ENCODE measurements at regions of chr12 and their contacts with region 1.

Region 1: DNA sequence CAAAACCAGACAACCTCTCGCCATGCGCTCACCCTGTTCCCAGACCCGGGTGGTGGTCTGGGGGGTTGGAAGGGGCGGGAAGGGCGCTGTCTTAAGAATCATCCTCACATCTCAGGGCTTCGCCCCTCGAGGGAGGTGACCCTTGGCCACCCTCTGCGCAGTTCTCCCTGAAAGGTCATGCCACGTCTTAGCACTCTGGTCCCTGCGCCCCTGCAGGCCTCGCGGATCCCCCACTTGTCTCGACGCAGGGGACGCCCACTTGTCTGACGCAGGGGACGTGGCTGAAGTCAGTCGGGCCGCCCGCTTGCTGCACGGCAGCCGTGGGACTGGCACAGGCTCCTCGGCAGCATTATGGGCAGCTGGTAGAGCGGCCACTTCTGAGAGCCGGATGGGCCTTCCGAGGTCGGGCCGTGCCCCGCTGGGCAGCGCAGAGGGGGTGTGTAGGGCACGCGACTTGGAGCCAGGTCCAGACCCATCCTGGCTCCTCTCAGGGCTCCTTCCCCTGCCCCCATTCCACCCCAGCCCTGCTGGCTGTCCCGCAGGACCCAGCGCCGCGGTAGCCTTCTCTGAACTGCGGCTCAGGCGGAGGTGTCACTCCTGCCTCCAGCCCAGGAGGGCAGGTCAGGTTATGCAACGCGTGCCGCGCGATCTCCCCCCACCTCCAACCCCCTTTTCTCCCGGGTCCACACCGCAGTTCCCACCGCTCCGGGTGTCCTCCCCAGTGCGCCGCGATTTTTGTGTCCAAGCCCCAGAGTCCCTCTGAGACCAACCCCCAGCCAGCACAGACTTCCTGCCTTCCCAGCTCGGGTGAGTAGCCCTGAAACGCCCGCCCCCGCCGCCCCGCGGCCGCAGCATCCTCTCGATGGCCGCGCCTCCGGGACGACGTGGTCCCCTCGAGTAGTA is 40.9 kb upstream of the CAPRIN2 start:
- DNase-seq: peak; percentile 60 to 84 (median 69)
- ATAC-seq: peak; percentile 37 to 85 (median 80)
- H3K4me3 ChIP-seq: peak overlapping the region; percentile 48 to 80 (median 63)
- H3K27ac ChIP-seq: peak overlapping the region in 11 of 12 donors; percentile 11 to 89 (median 49)
- H3K4me1 ChIP-seq: peaks cover 0 to 27% (median 11%) of the 10 kb centered on the region in 12 donors
- H3K27me3 ChIP-seq: peaks cover 0 to 23% (median 0%) of the 10 kb centered on the region in 9 donors
- CTCF ChIP-seq: peak in 3 of 12 donors; percentile 8 to 19 (median 17)
- POLR2A ChIP-seq: no peak

Region 2: GRCh38 chr12:30732954-30733637 is 62.6 kb before region 1 on chr12:
- intact Hi-C with region 1: no loop called
- DNase-seq: no peak
- ATAC-seq: no peak
- H3K4me3 ChIP-seq: no peak overlapping the region
- H3K27ac ChIP-seq: no peak overlapping the region
- H3K4me1 ChIP-seq: no peaks in the 10 kb centered on the region
- H3K27me3 ChIP-seq: no peaks in the 10 kb centered on the region
- CTCF ChIP-seq: no peak
- POLR2A ChIP-seq: no peak

Region 3: DNA sequence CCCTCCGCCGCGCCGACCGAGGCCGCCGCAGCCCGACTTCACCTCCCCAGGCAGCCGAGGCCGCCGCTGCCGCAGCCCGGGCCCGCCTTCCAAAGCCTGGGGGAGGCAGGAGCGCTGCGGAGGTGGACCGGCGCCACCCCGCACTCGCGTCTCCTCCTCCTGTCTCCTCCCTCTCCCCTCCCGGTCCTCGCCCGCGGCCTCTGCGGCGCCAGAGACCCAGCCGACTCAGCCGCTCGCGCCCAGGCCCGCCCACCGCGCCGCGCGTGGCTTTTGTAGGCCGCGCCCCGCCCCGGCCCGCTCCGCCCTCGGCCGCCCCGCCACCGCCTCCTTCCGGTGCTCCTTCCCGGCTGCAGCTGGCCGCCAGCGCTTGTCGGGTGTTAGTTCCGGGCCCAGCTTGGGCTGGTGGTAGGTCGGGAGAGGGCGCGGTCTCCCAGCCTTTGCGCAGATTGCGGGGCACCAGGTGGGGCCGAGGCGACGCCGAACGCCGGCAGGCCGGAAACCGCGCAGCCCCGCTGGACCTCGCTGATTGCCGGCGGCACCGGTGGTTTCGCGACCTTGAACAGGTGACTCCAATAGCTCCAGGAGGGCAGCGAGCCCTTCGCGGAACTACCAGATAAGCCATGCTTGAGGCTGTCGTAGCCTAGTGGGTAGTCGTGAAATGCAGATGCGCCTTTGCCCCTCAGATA is 40.8 kb before region 1 on chr12 and contains the start of gene CAPRIN2:
- intact Hi-C with region 1: loop called in 5 of 10 experiments (anchors 5 kb)
- DNase-seq: peak; percentile 96 to 99 (median 97)
- ATAC-seq: peak; percentile 96 to 99 (median 98)
- H3K4me3 ChIP-seq: peak within 1 kb of the TSS; percentile 59 to 99 (median 82)
- H3K27ac ChIP-seq: peak within 1 kb of the TSS; percentile 75 to 93 (median 88)
- H3K4me1 ChIP-seq: peaks cover 0 to 30% (median 13%) of the 10 kb centered on the region in 12 donors
- H3K27me3 ChIP-seq: no peaks in the 10 kb centered on the region
- CTCF ChIP-seq: peak in 10 of 12 donors; percentile 20 to 68 (median 46)
- POLR2A ChIP-seq: peak in 1 of 2 donors; percentile 79
- total RNA-seq, gene CAPRIN2: 15.3 to 33.6 (median 30.4) TPM

Region 4: DNA sequence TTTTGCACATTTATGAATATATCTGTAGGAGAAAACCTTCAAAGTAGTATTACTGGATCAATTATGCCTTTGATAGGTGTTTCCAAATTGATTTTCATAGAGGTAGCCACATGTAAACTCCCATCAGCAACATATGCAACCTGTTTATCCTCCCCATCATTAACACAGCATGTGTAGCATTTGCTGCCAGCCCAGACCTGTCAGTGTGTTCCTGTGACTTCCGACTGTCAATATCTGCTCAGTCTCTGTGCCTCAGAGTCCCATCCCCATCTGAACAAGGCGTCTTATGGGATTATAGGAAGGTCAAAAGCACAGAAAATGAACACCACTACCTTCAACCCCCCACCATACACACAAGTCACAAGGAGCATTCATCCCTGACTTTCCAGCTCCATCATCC is 31.4 kb before region 1 on chr12:
- intact Hi-C with region 1: loop called in 5 of 10 experiments (anchors 5 kb)
- DNase-seq: no peak
- ATAC-seq: no peak
- H3K4me3 ChIP-seq: no peak overlapping the region
- H3K27ac ChIP-seq: no peak overlapping the region
- H3K4me1 ChIP-seq: no peaks in the 10 kb centered on the region
- H3K27me3 ChIP-seq: no peaks in the 10 kb centered on the region
- CTCF ChIP-seq: no peak
- POLR2A ChIP-seq: no peak

Region 5: DNA sequence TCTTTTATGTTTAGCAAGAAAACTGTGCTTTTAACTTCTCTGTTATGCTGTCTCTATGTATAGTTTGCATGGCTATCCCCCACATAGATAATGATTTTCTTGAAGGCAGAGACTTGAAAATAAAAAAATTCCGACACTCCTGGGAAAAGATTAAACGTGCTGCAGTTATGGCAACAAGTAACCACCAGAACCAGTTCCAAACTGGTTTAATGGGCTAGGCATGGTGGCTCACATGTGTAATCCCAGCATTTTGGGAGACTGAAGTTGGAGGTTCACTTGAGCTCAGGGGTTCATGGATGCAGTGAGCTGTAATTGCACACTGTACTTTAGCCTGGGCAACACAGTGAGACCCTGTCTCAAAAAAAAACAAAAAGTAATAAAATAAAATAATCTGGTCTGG is 25.9 kb before region 1 on chr12:
- intact Hi-C with region 1: loop called in 1 of 10 experiments (anchors 5 kb)
- DNase-seq: no peak
- ATAC-seq: no peak
- H3K4me3 ChIP-seq: no peak overlapping the region
- H3K27ac ChIP-seq: no peak overlapping the region
- H3K4me1 ChIP-seq: no peaks in the 10 kb centered on the region
- H3K27me3 ChIP-seq: no peaks in the 10 kb centered on the region
- CTCF ChIP-seq: no peak
- POLR2A ChIP-seq: no peak

Region 6: DNA sequence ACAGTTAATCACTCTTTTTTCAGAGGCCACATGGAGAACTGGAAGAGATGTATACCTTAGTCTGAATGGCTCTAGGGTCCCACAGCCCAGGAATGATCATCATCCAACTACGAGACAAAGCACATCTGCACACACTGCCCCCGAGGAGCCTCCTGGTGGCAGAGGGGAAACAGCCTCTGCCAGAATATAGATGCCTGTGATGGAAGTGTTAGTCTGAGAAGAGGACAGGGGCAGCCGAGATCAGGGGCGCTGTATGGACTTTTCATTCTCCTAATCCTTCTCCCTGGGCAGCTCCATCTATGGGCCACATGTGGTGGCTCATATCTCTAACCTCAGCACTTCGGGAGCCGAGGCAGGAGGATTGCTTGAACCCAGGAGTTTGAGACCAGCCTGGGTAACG is 41.9 kb after region 1 on chr12:
- intact Hi-C with region 1: no loop called
- DNase-seq: no peak
- ATAC-seq: no peak
- H3K4me3 ChIP-seq: no peak overlapping the region
- H3K27ac ChIP-seq: no peak overlapping the region
- H3K4me1 ChIP-seq: no peaks in the 10 kb centered on the region
- H3K27me3 ChIP-seq: peaks cover 0 to 24% (median 0%) of the 10 kb centered on the region in 9 donors
- CTCF ChIP-seq: no peak
- POLR2A ChIP-seq: no peak